ENCODE measurements at regions of chr10 and their contacts with region 1.

Region 1: DNA sequence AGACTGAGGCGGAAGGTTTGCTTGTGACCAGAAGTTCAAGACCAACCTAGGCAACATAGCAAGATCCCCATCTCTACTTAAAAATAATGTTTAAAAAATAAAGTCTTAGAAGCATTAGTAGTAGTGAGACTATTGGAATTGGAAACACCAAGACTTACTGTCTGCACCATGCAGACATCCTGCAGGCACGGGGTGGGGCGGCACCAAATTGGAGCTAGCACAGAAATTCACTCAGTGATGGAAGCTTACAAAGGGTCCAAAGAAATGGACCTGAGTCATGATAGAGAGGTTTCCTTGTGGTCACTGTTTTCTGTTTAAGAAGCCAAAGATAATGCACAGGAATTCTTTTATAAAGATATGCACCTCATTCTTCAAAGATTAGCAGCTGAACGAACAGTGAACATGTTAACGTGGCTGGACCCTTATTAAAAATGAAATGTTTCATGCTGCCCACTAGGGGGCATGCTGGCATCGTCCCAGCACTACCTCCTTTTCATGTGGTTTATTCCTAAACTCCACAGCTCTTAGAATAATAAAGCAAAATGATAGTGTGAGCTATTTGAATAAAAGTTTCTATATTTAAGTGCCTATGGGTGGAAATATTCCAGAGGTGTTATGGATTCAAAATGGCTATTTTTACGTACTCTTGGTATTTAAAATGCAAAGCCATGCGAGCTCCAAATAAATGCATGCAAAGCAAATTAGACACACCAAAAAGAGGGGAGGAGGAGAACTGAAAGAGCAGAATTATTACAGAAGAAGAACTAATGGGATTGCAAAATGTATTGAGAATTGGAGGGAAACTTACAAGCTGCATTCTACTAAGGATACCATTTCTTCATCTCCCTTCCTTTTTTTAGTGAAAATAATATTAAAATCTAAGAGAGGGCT is 28.6 kb downstream of the PDSS1 start:
- DNase-seq: peak in 1 of 2 experiments; percentile 69
- H3K4me3 ChIP-seq: no peak overlapping the region
- H3K4me3 Mint-ChIP-seq: no peak overlapping the region
- H3K27ac Mint-ChIP-seq: no peak overlapping the region
- H3K4me1 ChIP-seq: no peaks in the 10 kb centered on the region
- H3K4me1 Mint-ChIP-seq: no peaks in the 10 kb centered on the region
- H3K27me3 ChIP-seq: no peaks in the 10 kb centered on the region
- H3K27me3 Mint-ChIP-seq: no peaks in the 10 kb centered on the region
- CTCF ChIP-seq: peak; percentile 88 to 93

Region 2: GRCh38 chr10:26448706-26449435 is 277.2 kb before region 1 on chr10:
- CTCF ChIA-PET with region 1: no interaction called
- POLR2A ChIA-PET with region 1: no interaction called
- intact Hi-C with region 1: no loop called
- DNase-seq: no peak
- H3K4me3 ChIP-seq: no peak overlapping the region
- H3K4me3 Mint-ChIP-seq: no peak overlapping the region
- H3K27ac Mint-ChIP-seq: no peak overlapping the region
- H3K4me1 ChIP-seq: no peaks in the 10 kb centered on the region
- H3K4me1 Mint-ChIP-seq: peaks cover 5% of the 10 kb centered on the region
- H3K27me3 ChIP-seq: no peaks in the 10 kb centered on the region
- H3K27me3 Mint-ChIP-seq: no peaks in the 10 kb centered on the region
- CTCF ChIP-seq: no peak

Region 3: GRCh38 chr10:26682931-26683330 is 43.2 kb before region 1 on chr10:
- CTCF ChIA-PET with region 1: no interaction called
- POLR2A ChIA-PET with region 1: no interaction called
- intact Hi-C with region 1: loop called (anchors 1 kb)
- DNase-seq: no peak
- H3K4me3 ChIP-seq: no peak overlapping the region
- H3K4me3 Mint-ChIP-seq: no peak overlapping the region
- H3K27ac Mint-ChIP-seq: no peak overlapping the region
- H3K4me1 ChIP-seq: no peaks in the 10 kb centered on the region
- H3K4me1 Mint-ChIP-seq: peaks cover 7% of the 10 kb centered on the region
- H3K27me3 ChIP-seq: no peaks in the 10 kb centered on the region
- H3K27me3 Mint-ChIP-seq: peaks cover 13% of the 10 kb centered on the region
- CTCF ChIP-seq: no peak

Region 4: GRCh38 chr10:26860443-26861204 is 134.5 kb after region 1 on chr10 and contains the start of gene ABI1:
- CTCF ChIA-PET with region 1: interaction called, 4 read pairs
- POLR2A ChIA-PET with region 1: no interaction called
- intact Hi-C with region 1: loop called (anchors 1 kb)
- DNase-seq: peak; percentile 99 to 100
- H3K4me3 ChIP-seq: peak within 1 kb of the TSS; percentile 82
- H3K4me3 Mint-ChIP-seq: peak within 1 kb of the TSS; percentile 97
- H3K27ac Mint-ChIP-seq: peak within 1 kb of the TSS; percentile 99
- H3K4me1 ChIP-seq: peaks cover 13% of the 10 kb centered on the region
- H3K4me1 Mint-ChIP-seq: peaks cover 26% of the 10 kb centered on the region
- H3K27me3 ChIP-seq: no peaks in the 10 kb centered on the region
- H3K27me3 Mint-ChIP-seq: no peaks in the 10 kb centered on the region
- CTCF ChIP-seq: no peak
- total RNA-seq, gene ABI1: 89.6 and 95.8 TPM in 2 replicates

Region 5: DNA sequence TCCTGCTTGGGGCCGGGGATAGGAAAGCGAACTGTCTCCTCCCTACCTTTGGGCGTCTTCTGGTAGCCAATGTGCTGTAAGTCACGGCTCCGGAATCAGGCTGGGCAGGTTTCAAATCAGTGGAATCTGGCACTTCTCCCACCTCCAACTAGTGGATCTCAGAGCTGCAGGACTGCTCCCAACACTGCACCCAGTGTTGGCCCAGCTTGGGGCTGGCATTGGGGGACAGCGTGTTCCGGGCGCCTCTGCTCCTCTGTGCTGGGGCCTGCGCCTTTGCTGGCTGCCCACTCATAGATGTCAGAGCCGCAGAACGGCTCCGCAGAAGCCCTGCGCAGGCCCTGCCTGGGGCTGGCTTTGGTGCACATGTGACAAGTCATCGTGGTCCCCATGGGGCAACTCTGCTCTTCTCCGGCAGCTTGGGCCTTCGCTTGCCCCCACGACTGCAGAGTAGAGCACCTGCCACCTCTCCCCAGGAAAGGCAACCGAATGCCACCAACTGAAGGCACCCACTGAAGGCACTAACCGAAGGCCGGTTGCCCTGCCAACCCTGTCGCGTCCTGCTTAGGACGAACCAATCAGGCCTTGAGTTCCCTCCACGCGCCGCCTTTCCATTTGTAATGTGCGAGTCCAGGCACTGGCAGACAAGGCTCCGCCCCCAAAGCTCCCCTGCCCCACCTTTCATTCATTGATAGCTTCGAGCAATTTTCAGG is 220.2 kb after region 1 on chr10:
- CTCF ChIA-PET with region 1: no interaction called
- POLR2A ChIA-PET with region 1: no interaction called
- intact Hi-C with region 1: no loop called
- DNase-seq: no peak
- H3K4me3 ChIP-seq: no peak overlapping the region
- H3K4me3 Mint-ChIP-seq: no peak overlapping the region
- H3K27ac Mint-ChIP-seq: no peak overlapping the region
- H3K4me1 ChIP-seq: no peaks in the 10 kb centered on the region
- H3K4me1 Mint-ChIP-seq: no peaks in the 10 kb centered on the region
- H3K27me3 ChIP-seq: no peaks in the 10 kb centered on the region
- H3K27me3 Mint-ChIP-seq: peaks cover 2% of the 10 kb centered on the region
- CTCF ChIP-seq: no peak